Activated T-helper 1 cell treated with anti-CD3 and anti-CD28 coated beads, Interleukin-12 subunit alpha, Interleukin-12 subunit beta, Interleukin-2, Interleukin-4 antibody, amounts not matched to agents 30 ng/mL and 10 ng/mL and 1 ng/mL, durations not matched to agents 14 hours and 24 hours and 36 hours (primary cell): ENCODE measurements at regions of chr1 and their contacts with region 1.

Region 1: DNA sequence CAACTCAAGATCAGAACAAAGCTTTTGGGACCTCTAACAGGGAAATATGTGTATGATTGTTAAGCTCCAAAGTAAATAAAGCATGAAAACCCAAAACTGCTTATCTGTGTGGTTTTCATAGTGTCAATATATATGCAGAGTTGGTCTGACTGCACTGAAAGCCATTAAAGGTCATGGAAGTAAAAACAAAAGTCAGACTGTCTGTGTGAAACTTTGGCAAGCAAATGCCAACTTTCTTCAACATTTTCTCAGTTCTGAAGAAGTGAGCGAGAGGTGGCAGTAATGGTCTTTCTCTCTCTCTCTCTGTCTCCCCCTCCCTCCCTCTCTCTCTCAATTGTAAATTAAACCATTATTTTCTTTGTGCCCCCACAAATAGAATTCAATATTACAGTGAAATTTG is 100.1 kb upstream of the S1PR1 start:
- DNase-seq: peak; percentile 26
- H3K4me3 Mint-ChIP-seq: peak overlapping the region; percentile 30
- H3K27ac Mint-ChIP-seq: peak overlapping the region; percentile 38
- H3K4me1 Mint-ChIP-seq: peaks cover 63% of the 10 kb centered on the region
- H3K27me3 Mint-ChIP-seq: no peaks in the 10 kb centered on the region

Region 2: DNA sequence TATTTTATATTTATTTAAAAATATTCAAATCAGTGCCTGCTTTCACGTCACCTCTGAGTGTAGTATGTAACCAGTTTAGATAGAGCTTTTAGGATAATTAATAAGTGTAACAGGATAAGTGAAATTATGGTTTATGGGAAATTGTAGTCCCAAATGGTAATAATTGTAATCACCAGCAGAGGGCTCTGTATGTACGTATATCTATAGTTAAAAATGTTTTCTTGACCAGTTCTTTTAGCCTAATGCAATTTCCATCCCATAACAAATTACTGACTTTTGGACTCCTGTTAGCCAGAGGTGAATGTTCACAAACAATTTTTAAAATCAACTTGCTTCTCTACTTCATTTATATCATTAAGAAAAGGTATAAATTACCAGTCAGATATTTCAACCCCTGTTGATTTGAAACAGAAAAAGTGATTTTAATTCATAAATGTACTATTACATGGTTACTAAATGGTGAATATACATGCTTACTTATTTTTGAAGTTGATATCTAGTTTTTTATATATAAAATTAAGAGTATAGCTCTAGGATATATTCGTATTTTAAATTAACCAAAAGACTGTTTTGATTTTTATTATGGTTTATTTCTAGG is 215.5 kb before region 1 on chr1:
- intact Hi-C with region 1: loop called (anchors 1 kb)
- DNase-seq: no peak
- H3K4me3 Mint-ChIP-seq: no peak overlapping the region
- H3K27ac Mint-ChIP-seq: no peak overlapping the region
- H3K4me1 Mint-ChIP-seq: peaks cover 29% of the 10 kb centered on the region
- H3K27me3 Mint-ChIP-seq: no peaks in the 10 kb centered on the region

Region 3: DNA sequence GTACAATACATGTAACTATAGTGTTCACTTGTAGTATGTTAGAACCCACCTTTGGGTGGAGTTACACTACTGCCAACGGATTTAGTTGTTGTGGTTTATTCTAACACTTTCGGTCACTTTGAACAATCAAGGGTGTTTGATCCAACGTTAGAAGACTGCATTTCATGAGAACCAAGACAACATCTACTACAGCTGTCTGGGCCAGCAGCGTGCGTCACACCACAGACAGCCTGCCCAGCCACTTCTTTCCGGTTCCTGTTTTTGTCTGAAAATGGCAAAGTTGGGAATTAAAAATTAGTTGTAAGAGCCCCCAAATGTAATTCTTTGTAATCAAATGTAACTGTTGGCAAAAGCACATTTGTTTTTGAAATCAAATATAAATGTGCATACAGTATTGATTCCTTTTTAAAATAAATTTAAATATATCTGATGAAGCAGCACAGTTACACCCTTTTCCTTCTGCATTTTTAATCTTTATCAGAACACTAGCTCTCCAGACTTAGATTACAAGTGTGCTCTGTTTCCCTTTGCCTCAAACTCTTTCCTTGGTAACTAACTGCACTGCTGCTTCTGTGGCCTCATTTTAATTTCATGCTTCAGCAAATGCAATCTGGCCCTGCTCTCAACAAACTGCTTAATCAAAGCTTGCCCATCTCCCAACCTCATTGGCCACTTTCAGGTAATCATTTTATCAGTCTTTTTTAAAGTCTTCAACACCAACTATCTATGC is 24.5 kb before region 1 on chr1:
- intact Hi-C with region 1: loop called (anchors 1 kb)
- DNase-seq: peak; percentile 59
- H3K4me3 Mint-ChIP-seq: peak overlapping the region; percentile 47
- H3K27ac Mint-ChIP-seq: peak overlapping the region; percentile 77
- H3K4me1 Mint-ChIP-seq: peaks cover 40% of the 10 kb centered on the region
- H3K27me3 Mint-ChIP-seq: no peaks in the 10 kb centered on the region

Region 4: GRCh38 chr1:101198842-101199636 is 62.3 kb after region 1 on chr1:
- intact Hi-C with region 1: loop called (anchors 1 kb)
- DNase-seq: no peak
- H3K4me3 Mint-ChIP-seq: peak overlapping the region; percentile 9
- H3K27ac Mint-ChIP-seq: peak overlapping the region; percentile 85
- H3K4me1 Mint-ChIP-seq: peaks cover 35% of the 10 kb centered on the region
- H3K27me3 Mint-ChIP-seq: no peaks in the 10 kb centered on the region

Region 5: GRCh38 chr1:101371259-101371658 is 234.5 kb after region 1 on chr1:
- intact Hi-C with region 1: loop called (anchors 5 kb)
- DNase-seq: peak; percentile 33
- H3K4me3 Mint-ChIP-seq: peak overlapping the region; percentile 40
- H3K27ac Mint-ChIP-seq: no peak overlapping the region
- H3K4me1 Mint-ChIP-seq: peaks cover 12% of the 10 kb centered on the region
- H3K27me3 Mint-ChIP-seq: peaks cover 14% of the 10 kb centered on the region

Region 6: DNA sequence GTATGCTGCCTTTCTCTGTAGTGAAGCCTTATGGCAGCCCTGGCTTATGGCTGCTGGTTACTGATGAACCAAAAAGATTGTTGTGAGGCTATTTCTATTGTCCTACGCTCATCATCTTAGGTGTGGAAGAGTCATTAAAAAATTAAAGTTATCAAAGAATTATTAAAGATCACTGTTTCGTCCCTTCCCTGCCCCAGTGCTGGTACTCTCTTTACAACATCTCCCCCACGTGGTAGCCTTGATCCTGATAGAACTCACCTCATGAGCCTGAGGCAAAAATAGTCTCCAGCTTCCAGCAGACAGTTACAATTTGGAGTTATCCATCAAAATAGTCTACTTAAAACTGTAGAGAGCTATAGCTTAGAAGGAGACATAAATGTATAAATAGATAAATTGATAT is 301.6 kb after region 1 on chr1:
- intact Hi-C with region 1: no loop called
- DNase-seq: no peak
- H3K4me3 Mint-ChIP-seq: no peak overlapping the region
- H3K27ac Mint-ChIP-seq: no peak overlapping the region
- H3K4me1 Mint-ChIP-seq: no peaks in the 10 kb centered on the region
- H3K27me3 Mint-ChIP-seq: peaks cover 30% of the 10 kb centered on the region